Naive thymus-derived CD4-positive, alpha-beta T cell (primary cell): ENCODE measurements at regions of chr2 and their contacts with region 1.

Region 1: DNA sequence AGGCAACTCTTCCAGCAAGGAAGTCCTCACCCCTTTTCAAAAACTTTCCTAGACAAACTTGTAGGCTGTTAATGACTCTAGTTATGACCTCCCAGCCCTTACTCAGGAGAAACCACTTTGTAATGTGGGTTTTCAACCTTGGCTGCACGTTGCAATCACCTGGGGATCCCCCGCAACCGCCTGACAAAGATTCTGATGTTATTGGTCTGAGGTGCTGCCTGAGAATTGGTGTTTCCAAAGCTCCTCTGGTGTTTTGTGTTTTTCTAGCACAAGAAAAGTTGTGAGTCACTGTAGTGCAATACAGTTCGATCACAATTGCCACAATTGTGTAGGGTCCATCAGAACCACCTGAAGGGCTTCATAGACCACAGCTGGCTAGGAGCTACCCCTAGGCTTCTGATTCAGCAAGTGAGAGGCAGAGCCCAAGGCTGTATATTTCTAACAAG is 121.6 kb downstream of the SP100 start:
- DNase-seq: peak in 1 of 9 donors; percentile 34
- ATAC-seq: no peak
- H3K4me3 ChIP-seq: no peak overlapping the region
- H3K4me3 Mint-ChIP-seq: no peak overlapping the region
- H3K27ac ChIP-seq: no peak overlapping the region
- H3K27ac Mint-ChIP-seq: peak overlapping the region; percentile 16 to 89 (median 54)
- H3K4me1 ChIP-seq: no peaks in the 10 kb centered on the region
- H3K4me1 Mint-ChIP-seq: peaks cover 0 to 36% (median 4%) of the 10 kb centered on the region in 7 donors
- H3K27me3 ChIP-seq: no peaks in the 10 kb centered on the region
- H3K27me3 Mint-ChIP-seq: no peaks in the 10 kb centered on the region

Region 2: DNA sequence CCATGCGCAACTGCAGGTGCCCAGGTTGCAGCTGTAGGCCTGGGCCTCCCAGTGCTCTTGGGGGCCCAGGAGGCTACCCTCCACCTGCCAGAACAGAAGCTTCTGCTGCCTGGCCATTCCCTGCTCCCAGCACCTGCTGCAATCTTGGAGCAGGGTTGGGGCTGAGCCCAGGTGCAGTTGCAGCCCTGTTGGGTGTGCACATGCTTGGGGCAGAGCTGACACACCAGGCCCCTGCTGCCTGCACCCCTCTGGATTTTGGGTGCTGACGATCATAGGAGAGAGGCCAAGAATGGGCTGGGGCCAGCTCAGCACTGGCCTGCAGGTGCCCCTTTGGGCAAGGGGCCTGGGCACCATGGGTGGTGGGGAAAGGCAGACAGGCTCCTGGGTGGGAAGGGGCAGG is 231.1 kb before region 1 on chr2:
- CTCF ChIA-PET with region 1: no interaction called
- POLR2A ChIA-PET with region 1: no interaction called
- intact Hi-C with region 1: no loop called
- DNase-seq: no peak
- ATAC-seq: no peak
- H3K4me3 ChIP-seq: no peak overlapping the region
- H3K4me3 Mint-ChIP-seq: no peak overlapping the region
- H3K27ac ChIP-seq: no peak overlapping the region
- H3K27ac Mint-ChIP-seq: no peak overlapping the region
- H3K4me1 ChIP-seq: no peaks in the 10 kb centered on the region
- H3K4me1 Mint-ChIP-seq: peaks cover 2 to 26% (median 12%) of the 10 kb centered on the region in 7 donors
- H3K27me3 ChIP-seq: no peaks in the 10 kb centered on the region
- H3K27me3 Mint-ChIP-seq: no peaks in the 10 kb centered on the region

Region 3: GRCh38 chr2:230602562-230603230 is 65.1 kb after region 1 on chr2:
- CTCF ChIA-PET with region 1: no interaction called
- POLR2A ChIA-PET with region 1: no interaction called
- intact Hi-C with region 1: loop called in 1 of 2 experiments (anchors 5 kb)
- DNase-seq: peak in 7 of 9 donors; percentile 51 to 79 (median 74)
- ATAC-seq: peak; percentile 90
- H3K4me3 ChIP-seq: peak overlapping the region; percentile 14
- H3K4me3 Mint-ChIP-seq: peak overlapping the region; percentile 66 to 90 (median 78)
- H3K27ac ChIP-seq: peak overlapping the region; percentile 64
- H3K27ac Mint-ChIP-seq: peak overlapping the region; percentile 93 to 99 (median 98)
- H3K4me1 ChIP-seq: peaks cover 35 to 38% of the 10 kb centered on the region in 2 donors
- H3K4me1 Mint-ChIP-seq: peaks cover 27 to 84% (median 71%) of the 10 kb centered on the region in 7 donors
- H3K27me3 ChIP-seq: no peaks in the 10 kb centered on the region
- H3K27me3 Mint-ChIP-seq: no peaks in the 10 kb centered on the region

Region 4: GRCh38 chr2:231961349-231962166 is 1424.0 kb after region 1 on chr2 and contains the start of gene DIS3L2:
- CTCF ChIA-PET with region 1: no interaction called
- POLR2A ChIA-PET with region 1: no interaction called
- intact Hi-C with region 1: no loop called
- DNase-seq: peak; percentile 66 to 83 (median 81)
- ATAC-seq: peak; percentile 96
- H3K4me3 ChIP-seq: peak within 1 kb of the TSS; percentile 79
- H3K4me3 Mint-ChIP-seq: peak within 1 kb of the TSS; percentile 83 to 96 (median 91)
- H3K27ac ChIP-seq: peak within 1 kb of the TSS; percentile 77
- H3K27ac Mint-ChIP-seq: peak within 1 kb of the TSS; percentile 78 to 96 (median 94)
- H3K4me1 ChIP-seq: peaks cover 14 to 17% of the 10 kb centered on the region in 2 donors
- H3K4me1 Mint-ChIP-seq: peaks cover 22 to 52% (median 45%) of the 10 kb centered on the region in 7 donors
- H3K27me3 ChIP-seq: no peaks in the 10 kb centered on the region
- H3K27me3 Mint-ChIP-seq: peaks cover 0 to 3% (median under 1%) of the 10 kb centered on the region in 5 donors
- total RNA-seq, gene DIS3L2: 47.1 to 78.4 (median 66.4) TPM